IMR-90 (cell line): ENCODE measurements at regions of chr20 and their contacts with region 1.

Region 1: GRCh38 chr20:10721137-10721896 is 47.5 kb upstream of the JAG1 start:
- DNase-seq: peak; percentile 69
- ATAC-seq: peak; percentile 61
- H3K4me3 ChIP-seq: no peak overlapping the region
- H3K27ac ChIP-seq: no peak overlapping the region
- H3K4me1 ChIP-seq: peaks cover 10% of the 10 kb centered on the region
- H3K27me3 ChIP-seq: no peaks in the 10 kb centered on the region; the same call in 1 of the 2 replicates
- CTCF ChIP-seq: no peak
- POLR2A ChIP-seq: no peak
- RAD21 ChIP-seq: no peak

Region 2: GRCh38 chr20:10047427-10047826 is 673.9 kb before region 1 on chr20:
- CTCF ChIA-PET with region 1: no interaction called
- POLR2A ChIA-PET with region 1: no interaction called
- dilution Hi-C with region 1: no loop called
- in situ Hi-C with region 1: no loop called
- intact Hi-C with region 1: no loop called
- DNase-seq: peak; percentile 1
- ATAC-seq: peak; percentile 60
- H3K4me3 ChIP-seq: no peak overlapping the region
- H3K27ac ChIP-seq: no peak overlapping the region
- H3K4me1 ChIP-seq: no peaks in the 10 kb centered on the region
- H3K27me3 ChIP-seq: no peaks in the 10 kb centered on the region
- CTCF ChIP-seq: no peak
- POLR2A ChIP-seq: no peak
- RAD21 ChIP-seq: no peak

Region 3: DNA sequence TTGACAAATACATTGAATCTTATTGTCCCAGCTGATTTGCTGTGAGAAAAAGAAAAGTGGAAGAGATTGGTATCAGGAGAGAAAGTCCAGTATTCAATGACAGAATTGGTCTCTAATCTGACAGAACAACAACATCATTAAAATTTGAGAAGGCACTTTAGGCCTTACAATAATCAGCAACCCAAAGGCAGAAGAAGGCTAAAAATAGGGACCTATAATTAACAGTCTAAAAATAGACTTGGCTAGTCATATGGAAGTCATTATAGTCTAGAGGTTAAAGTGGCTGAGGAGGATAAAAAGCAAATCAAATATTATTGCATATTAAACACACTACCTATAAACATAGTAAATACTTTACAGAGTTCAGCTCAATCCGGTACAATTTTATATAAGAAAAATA is 346.0 kb after region 1 on chr20:
- CTCF ChIA-PET with region 1: no interaction called
- POLR2A ChIA-PET with region 1: interaction called, 11 read pairs
- dilution Hi-C with region 1: no loop called
- in situ Hi-C with region 1: no loop called
- intact Hi-C with region 1: no loop called
- DNase-seq: no peak
- ATAC-seq: no peak
- H3K4me3 ChIP-seq: no peak overlapping the region
- H3K27ac ChIP-seq: no peak overlapping the region
- H3K4me1 ChIP-seq: no peaks in the 10 kb centered on the region
- H3K27me3 ChIP-seq: no peaks in the 10 kb centered on the region; the same call in 1 of the 2 replicates
- CTCF ChIP-seq: no peak
- POLR2A ChIP-seq: no peak
- RAD21 ChIP-seq: no peak